Naive thymus-derived CD4-positive, alpha-beta T cell (primary cell): ENCODE measurements at regions of chr17 and their contacts with region 1.

Region 1: DNA sequence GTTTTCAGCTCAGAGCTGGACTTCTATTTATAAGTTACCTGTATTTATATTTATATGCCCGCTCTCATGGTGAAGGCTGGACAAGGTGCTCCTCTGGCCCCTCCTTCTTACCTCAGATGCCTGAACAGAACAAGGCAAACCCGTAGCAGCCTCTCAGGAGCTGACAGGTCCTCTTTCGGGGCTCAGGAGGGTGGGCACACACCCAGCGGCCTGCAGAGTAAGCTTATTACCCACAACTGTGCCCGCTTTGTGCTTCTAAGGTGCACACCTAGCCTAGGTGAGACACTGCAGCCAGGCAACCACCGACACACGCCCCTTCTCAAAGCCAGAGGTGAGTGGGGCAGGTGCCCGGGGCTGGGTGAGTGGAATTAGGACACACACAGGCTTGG is 5.3 kb downstream of the NKIRAS2 start:
- DNase-seq: no peak
- ATAC-seq: no peak
- H3K4me3 ChIP-seq: no peak overlapping the region
- H3K4me3 Mint-ChIP-seq: no peak overlapping the region
- H3K27ac ChIP-seq: no peak overlapping the region
- H3K27ac Mint-ChIP-seq: peak overlapping the region in 3 of 9 donors; percentile 18 to 75 (median 37)
- H3K4me1 ChIP-seq: peaks cover 9 to 11% of the 10 kb centered on the region in 2 donors
- H3K4me1 Mint-ChIP-seq: peaks cover 6 to 26% (median 24%) of the 10 kb centered on the region in 7 donors
- H3K27me3 ChIP-seq: no peaks in the 10 kb centered on the region
- H3K27me3 Mint-ChIP-seq: peaks cover 0 to 8% (median 0%) of the 10 kb centered on the region in 5 donors

Region 2: GRCh38 chr17:41948762-41949460 is 76.3 kb before region 1 on chr17:
- CTCF ChIA-PET with region 1: no interaction called
- POLR2A ChIA-PET with region 1: no interaction called
- intact Hi-C with region 1: no loop called
- DNase-seq: no peak
- ATAC-seq: no peak
- H3K4me3 ChIP-seq: no peak overlapping the region
- H3K4me3 Mint-ChIP-seq: no peak overlapping the region
- H3K27ac ChIP-seq: no peak overlapping the region
- H3K27ac Mint-ChIP-seq: no peak overlapping the region
- H3K4me1 ChIP-seq: no peaks in the 10 kb centered on the region
- H3K4me1 Mint-ChIP-seq: no peaks in the 10 kb centered on the region
- H3K27me3 ChIP-seq: no peaks in the 10 kb centered on the region
- H3K27me3 Mint-ChIP-seq: no peaks in the 10 kb centered on the region

Region 3: GRCh38 chr17:42050393-42051012 is 25.3 kb after region 1 on chr17 and contains the start of gene C17orf113:
- CTCF ChIA-PET with region 1: interaction called, 9 read pairs
- POLR2A ChIA-PET with region 1: interaction called, 3 read pairs
- intact Hi-C with region 1: loop called in 1 of 2 experiments (anchors 1 kb)
- DNase-seq: peak; percentile 11 to 42 (median 33)
- ATAC-seq: peak; percentile 85
- H3K4me3 ChIP-seq: peak within 1 kb of the TSS; percentile 37
- H3K4me3 Mint-ChIP-seq: peak within 1 kb of the TSS; percentile 74 to 92 (median 81)
- H3K27ac ChIP-seq: no peak within 1 kb of the TSS
- H3K27ac Mint-ChIP-seq: peak within 1 kb of the TSS in 3 of 9 donors; percentile 59 to 87 (median 68)
- H3K4me1 ChIP-seq: peaks cover 0 to 4% of the 10 kb centered on the region in 2 donors
- H3K4me1 Mint-ChIP-seq: peaks cover 6 to 13% (median 7%) of the 10 kb centered on the region in 7 donors
- H3K27me3 ChIP-seq: no peaks in the 10 kb centered on the region
- H3K27me3 Mint-ChIP-seq: peaks cover 23 to 62% (median 25%) of the 10 kb centered on the region in 5 donors
- total RNA-seq, gene C17orf113: 0.10 to 1.0 (median 0.67) TPM

Region 4: DNA sequence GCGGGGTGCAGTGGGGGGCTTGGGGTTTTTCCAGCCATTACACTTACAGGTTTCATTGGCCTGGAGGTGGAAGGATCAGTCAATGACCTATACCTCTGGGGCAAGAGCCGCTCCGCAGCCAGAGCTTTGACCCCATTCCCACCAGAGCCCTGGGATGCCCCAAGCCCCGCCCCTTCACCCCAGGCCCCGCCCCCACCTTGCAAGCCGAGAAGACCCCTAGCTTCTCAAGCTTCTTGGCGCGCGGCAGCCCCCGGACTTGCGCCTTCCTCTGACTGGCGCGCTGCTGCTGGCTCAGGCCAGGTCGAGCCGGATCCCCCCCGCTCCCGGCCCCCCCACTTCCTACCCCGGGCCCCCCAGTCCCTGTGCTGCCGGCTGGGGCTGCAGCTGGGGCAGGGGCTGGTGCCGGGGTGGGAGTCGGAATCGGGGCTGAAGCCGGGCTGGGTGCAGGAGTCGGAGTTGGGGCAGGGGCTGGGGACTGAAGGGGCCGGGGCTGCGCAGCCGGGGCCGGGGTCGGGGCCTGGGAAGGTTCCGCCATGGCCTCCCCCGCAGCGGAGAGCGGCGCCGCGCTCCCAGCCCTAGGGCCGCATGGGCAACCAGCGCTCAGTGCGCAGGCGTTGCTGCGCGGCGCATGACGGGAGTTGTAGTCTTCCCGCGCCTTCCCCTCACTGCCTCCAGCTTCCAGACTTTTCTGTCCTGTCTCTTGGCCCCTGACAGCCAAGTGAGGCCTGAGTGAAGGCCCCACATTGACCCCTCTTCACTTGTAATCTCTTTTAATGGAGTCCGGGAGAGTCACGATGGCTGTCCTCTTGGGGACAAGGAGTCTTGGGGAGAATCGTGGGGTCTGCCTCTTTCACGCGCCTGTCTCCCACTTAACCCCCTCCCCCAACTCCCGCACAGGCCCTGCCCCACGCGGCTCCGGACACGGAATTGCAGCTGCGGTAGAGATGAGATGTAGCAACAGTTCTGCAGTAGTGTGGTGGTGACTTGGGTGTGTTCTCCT is 95.9 kb after region 1 on chr17 and contains the start of gene KAT2A:
- CTCF ChIA-PET with region 1: interaction called, 12 read pairs
- POLR2A ChIA-PET with region 1: interaction called, 4 read pairs
- intact Hi-C with region 1: loop called (anchors 1 kb)
- DNase-seq: peak; percentile 48 to 80 (median 68)
- ATAC-seq: peak; percentile 92
- H3K4me3 ChIP-seq: peak within 1 kb of the TSS; percentile 56
- H3K4me3 Mint-ChIP-seq: peak within 1 kb of the TSS; percentile 58 to 85 (median 74)
- H3K27ac ChIP-seq: peak within 1 kb of the TSS; percentile 75
- H3K27ac Mint-ChIP-seq: peak within 1 kb of the TSS in 8 of 9 donors; percentile 31 to 79 (median 68)
- H3K4me1 ChIP-seq: peaks cover 4 to 15% of the 10 kb centered on the region in 2 donors
- H3K4me1 Mint-ChIP-seq: peaks cover 10 to 35% (median 21%) of the 10 kb centered on the region in 7 donors
- H3K27me3 ChIP-seq: no peaks in the 10 kb centered on the region
- H3K27me3 Mint-ChIP-seq: no peaks in the 10 kb centered on the region
- total RNA-seq, gene KAT2A: 39.6 to 71.1 (median 49.1) TPM